Activated naive CD4-positive, alpha-beta T cell treated with anti-CD3 and anti-CD28 coated beads for 36 hours (primary cell): ENCODE measurements at regions of chr2 and their contacts with region 1.

Region 1: GRCh38 chr2:191650896-191651773 is 26.8 kb upstream of the NABP1 start:
- DNase-seq: no peak
- H3K4me3 Mint-ChIP-seq: no peak overlapping the region
- H3K27ac Mint-ChIP-seq: no peak overlapping the region
- H3K4me1 Mint-ChIP-seq: peaks cover 8% of the 10 kb centered on the region
- H3K27me3 Mint-ChIP-seq: no peaks in the 10 kb centered on the region

Region 2: DNA sequence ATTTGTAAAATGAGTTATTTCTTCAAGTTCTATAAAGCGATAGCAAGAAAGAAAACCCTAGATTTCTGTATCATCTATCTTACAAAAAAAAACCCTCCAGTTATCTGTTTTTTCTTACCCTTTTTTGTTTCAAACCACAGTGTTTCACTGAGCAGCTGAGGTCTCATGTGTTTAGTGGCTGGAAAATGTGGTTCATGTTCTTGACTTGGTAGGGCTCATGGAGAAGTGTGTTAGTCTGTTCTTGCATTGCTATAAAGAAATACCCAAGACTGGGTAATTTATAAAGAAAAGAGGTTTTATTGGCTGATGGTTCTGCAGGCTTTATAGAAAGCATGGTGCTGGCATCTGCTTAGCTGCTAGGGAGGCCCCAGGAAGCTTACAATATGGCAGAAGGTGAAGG is 120.5 kb before region 1 on chr2:
- CTCF ChIA-PET with region 1: no interaction called
- intact Hi-C with region 1: no loop called
- DNase-seq: no peak
- H3K4me3 Mint-ChIP-seq: no peak overlapping the region
- H3K27ac Mint-ChIP-seq: no peak overlapping the region
- H3K4me1 Mint-ChIP-seq: peaks cover 3% of the 10 kb centered on the region
- H3K27me3 Mint-ChIP-seq: no peaks in the 10 kb centered on the region

Region 3: GRCh38 chr2:191637182-191638078 is 13.7 kb before region 1 on chr2:
- CTCF ChIA-PET with region 1: no interaction called
- intact Hi-C with region 1: loop called (anchors 1 kb)
- DNase-seq: no peak
- H3K4me3 Mint-ChIP-seq: no peak overlapping the region
- H3K27ac Mint-ChIP-seq: peak overlapping the region; percentile 77
- H3K4me1 Mint-ChIP-seq: peaks cover 58% of the 10 kb centered on the region
- H3K27me3 Mint-ChIP-seq: no peaks in the 10 kb centered on the region

Region 4: DNA sequence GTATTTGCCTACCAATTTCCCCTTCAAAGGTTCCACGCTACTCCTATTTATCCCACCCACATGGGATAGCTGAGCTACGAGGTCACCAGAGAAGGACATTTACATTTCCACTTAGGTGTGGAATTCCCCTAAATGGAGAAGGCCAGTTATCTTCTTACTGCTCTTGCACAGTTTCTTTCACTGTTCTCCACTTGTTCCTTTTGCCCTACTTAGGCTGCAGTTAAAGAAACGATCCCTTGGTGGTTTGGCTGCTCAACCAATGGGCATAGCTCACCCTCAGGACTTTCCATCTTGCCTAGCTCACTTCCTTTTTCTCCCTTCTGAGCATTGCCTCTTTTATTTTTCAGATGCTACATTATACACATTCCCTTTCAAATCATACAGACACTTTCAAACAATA is 15.6 kb after region 1 on chr2:
- CTCF ChIA-PET with region 1: no interaction called
- intact Hi-C with region 1: loop called (anchors 1 kb)
- DNase-seq: no peak
- H3K4me3 Mint-ChIP-seq: no peak overlapping the region
- H3K27ac Mint-ChIP-seq: no peak overlapping the region
- H3K4me1 Mint-ChIP-seq: peaks cover 18% of the 10 kb centered on the region
- H3K27me3 Mint-ChIP-seq: no peaks in the 10 kb centered on the region